Mammary epithelial cell (primary cell): ENCODE measurements at regions of chr11 and their contacts with region 1.

Region 1: DNA sequence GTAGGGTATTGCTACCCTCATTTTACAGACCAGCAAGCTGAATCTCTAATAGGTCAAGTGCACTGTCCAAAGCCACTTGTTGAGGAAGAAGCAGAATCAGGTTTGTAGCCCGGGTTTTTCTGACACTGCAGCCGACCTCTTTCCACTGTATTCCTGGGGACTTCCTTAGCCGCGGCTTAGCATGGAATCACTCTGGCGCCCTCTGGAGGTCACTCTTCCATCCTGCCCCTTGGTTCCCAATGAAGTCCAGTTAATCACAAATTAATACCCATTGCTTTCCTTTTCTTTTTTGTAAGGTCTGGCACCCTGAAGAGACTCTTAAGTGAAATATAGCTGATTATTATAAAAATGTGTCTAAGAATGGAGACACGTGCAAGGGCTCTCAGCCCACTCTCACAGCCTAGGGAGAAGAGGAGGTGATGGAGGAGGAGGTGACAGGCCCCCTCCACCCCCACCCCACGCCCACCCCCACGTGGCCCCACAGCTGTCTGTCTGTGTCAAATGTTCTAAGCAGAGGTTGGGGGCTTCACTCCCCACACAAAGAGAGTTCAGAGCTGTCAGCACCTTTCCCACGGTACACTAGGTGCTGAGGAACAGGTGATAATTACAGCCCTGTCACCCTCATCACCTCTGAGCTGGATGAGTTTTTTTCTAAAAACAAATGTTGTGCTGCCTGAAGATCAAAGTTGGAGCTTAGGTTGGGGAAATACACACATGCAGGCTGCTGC is 57.7 kb upstream of the DRD2 start:
- DNase-seq: peak; percentile 64
- H3K4me3 ChIP-seq: no peak overlapping the region
- H3K27ac ChIP-seq: no peak overlapping the region
- H3K4me1 ChIP-seq: peaks cover 40% of the 10 kb centered on the region
- H3K27me3 ChIP-seq: no peaks in the 10 kb centered on the region
- CTCF ChIP-seq: peak; percentile 93 to 96

Region 2: GRCh38 chr11:112579282-112579681 is 953.6 kb before region 1 on chr11:
- CTCF ChIA-PET with region 1: no interaction called
- dilution Hi-C with region 1: no loop called
- in situ Hi-C with region 1: no loop called
- intact Hi-C with region 1: no loop called
- DNase-seq: no peak
- H3K4me3 ChIP-seq: no peak overlapping the region
- H3K27ac ChIP-seq: no peak overlapping the region
- H3K4me1 ChIP-seq: no peaks in the 10 kb centered on the region
- H3K27me3 ChIP-seq: peaks cover 3% of the 10 kb centered on the region
- CTCF ChIP-seq: no peak

Region 3: DNA sequence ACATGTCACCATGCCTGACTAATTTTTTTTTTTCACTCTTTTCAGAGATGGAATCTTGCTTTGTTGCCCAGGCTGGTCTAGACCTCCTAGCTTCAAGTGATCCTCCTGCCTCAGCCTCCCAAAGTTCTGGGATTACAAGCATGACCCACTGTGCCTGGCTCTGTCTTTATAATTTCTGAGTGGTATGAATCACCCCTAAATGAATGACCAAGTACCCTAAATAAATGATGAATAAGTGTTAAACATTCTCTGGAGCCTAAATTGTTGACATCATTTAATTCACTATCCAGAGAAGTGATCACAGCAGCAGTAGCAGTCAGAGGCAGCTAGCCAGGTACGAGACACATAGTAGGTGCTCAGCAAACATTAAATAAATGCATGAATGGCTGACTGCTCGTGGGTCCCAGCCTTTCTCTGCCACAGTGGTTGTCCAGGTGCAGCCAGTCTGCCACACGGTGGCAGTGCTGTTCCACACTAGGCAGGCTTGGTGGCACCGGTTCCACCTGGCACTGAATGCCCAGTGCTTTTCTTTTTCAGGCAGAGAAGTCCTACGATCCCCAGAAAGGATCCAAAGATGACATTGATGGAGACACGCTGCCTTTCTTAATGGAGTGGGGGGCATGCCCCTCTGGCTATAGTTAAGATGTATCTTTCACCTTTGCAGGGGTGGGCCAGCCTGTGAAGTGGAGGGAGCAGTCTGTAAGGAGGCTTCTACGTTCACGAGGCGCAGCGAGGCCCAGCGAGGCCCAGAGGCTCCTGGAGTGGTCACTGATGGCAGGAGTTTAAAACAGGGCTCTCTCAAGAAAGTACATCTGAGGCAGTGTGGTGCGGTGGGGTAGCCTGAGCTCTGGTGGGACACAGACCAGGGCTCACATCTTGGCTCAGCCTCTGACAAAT is 227.2 kb before region 1 on chr11:
- CTCF ChIA-PET with region 1: no interaction called
- dilution Hi-C with region 1: no loop called
- in situ Hi-C with region 1: loop called (anchors 5 kb)
- intact Hi-C with region 1: loop called (anchors 1 kb)
- DNase-seq: peak; percentile 61
- H3K4me3 ChIP-seq: no peak overlapping the region
- H3K27ac ChIP-seq: no peak overlapping the region
- H3K4me1 ChIP-seq: peaks cover 13% of the 10 kb centered on the region
- H3K27me3 ChIP-seq: no peaks in the 10 kb centered on the region
- CTCF ChIP-seq: peak; percentile 99

Region 4: GRCh38 chr11:113373306-113373705 is 159.6 kb before region 1 on chr11:
- CTCF ChIA-PET with region 1: no interaction called
- dilution Hi-C with region 1: no loop called
- in situ Hi-C with region 1: no loop called
- intact Hi-C with region 1: loop called (anchors 1 kb)
- DNase-seq: peak; percentile 79
- H3K4me3 ChIP-seq: no peak overlapping the region
- H3K27ac ChIP-seq: peak overlapping the region; percentile 60
- H3K4me1 ChIP-seq: peaks cover 56% of the 10 kb centered on the region
- H3K27me3 ChIP-seq: no peaks in the 10 kb centered on the region
- CTCF ChIP-seq: no peak

Region 5: GRCh38 chr11:113397212-113397611 is 135.6 kb before region 1 on chr11:
- CTCF ChIA-PET with region 1: no interaction called
- dilution Hi-C with region 1: no loop called
- in situ Hi-C with region 1: no loop called
- intact Hi-C with region 1: no loop called
- DNase-seq: no peak
- H3K4me3 ChIP-seq: no peak overlapping the region
- H3K27ac ChIP-seq: no peak overlapping the region
- H3K4me1 ChIP-seq: peaks cover 10% of the 10 kb centered on the region
- H3K27me3 ChIP-seq: no peaks in the 10 kb centered on the region
- CTCF ChIP-seq: no peak

Region 6: GRCh38 chr11:113417428-113417827 is 115.4 kb before region 1 on chr11:
- CTCF ChIA-PET with region 1: no interaction called
- dilution Hi-C with region 1: no loop called
- in situ Hi-C with region 1: no loop called
- intact Hi-C with region 1: no loop called
- DNase-seq: no peak
- H3K4me3 ChIP-seq: no peak overlapping the region
- H3K27ac ChIP-seq: no peak overlapping the region
- H3K4me1 ChIP-seq: no peaks in the 10 kb centered on the region
- H3K27me3 ChIP-seq: no peaks in the 10 kb centered on the region
- CTCF ChIP-seq: no peak

Region 7: DNA sequence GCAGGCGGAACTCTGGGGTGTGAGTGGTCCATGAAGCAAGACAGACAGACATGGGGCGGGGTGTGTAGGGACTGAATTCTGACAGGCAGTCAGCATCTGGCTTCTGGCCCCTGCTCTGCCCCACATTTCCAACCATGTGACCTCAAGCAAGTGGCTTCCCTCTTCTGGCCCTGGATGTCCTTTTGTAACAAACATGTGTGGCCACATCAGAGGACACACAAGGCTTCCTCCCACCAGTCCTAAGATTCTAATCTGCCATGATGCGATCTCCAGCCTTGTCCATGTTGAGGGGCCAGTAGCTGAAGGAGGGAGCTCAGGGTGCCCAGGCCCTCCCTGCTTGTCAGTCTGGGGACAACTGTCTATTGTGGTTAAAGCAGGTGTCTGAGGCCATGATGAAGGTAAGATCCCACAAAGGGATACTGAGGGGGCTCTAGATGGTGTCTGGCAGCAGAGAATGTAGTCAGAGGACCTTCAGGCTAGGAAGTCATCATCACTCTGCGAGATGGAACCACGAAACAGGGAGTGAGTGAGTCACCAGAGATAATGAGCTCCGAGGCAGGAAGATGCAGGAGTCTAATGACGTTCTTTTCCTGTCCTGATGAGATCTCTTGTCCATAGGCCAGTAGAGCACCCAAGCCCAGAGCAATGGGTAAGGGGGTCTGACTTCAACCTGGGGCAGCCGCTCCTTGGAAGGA is 85.1 kb before region 1 on chr11:
- CTCF ChIA-PET with region 1: no interaction called
- dilution Hi-C with region 1: no loop called
- in situ Hi-C with region 1: no loop called
- intact Hi-C with region 1: loop called (anchors 2 kb)
- DNase-seq: peak; percentile 93
- H3K4me3 ChIP-seq: no peak overlapping the region
- H3K27ac ChIP-seq: peak overlapping the region; percentile 97
- H3K4me1 ChIP-seq: peaks cover 35% of the 10 kb centered on the region
- H3K27me3 ChIP-seq: no peaks in the 10 kb centered on the region
- CTCF ChIP-seq: no peak

Region 8: DNA sequence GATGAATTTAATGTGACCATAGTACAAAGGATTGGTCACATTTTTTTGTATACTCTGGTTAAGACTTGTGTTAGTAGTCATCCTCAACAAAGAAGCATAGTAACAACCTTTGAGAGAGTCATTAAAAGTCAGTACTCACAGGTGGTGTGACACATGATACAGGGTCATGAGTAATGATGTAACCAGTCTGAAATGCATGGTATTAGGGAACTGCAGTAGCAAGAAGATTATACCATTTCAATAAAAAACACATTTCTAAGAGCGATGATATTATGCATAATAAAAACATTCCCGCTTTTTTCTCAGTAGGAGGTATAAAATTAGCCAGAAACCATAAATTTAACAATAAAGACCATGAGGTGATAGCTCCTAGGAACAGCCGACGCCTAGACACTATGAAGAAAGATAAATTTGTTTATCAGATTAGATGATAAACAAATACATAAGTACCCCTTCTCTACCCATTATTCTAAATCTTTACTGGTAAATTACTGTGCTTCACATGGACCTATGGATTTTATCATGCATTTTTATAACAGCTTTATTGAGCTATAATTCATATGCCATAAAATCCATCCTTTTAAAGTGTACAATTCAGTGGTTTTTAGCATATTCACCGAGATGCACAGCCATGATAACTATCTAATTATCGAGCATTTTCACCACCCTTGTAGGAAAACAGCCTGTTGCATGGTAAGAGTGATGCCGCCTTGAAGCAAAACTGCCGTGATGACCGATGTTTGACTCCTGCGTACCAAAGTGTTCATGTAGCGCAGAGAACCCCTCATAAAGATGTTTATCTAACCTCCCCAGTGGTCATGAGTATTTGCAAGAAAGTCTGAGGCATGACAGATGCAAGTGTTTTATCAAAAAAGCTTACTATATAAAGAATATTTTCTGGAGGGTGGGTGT is 131.5 kb after region 1 on chr11:
- CTCF ChIA-PET with region 1: no interaction called
- dilution Hi-C with region 1: no loop called
- in situ Hi-C with region 1: no loop called
- intact Hi-C with region 1: no loop called
- DNase-seq: peak; percentile 85
- H3K4me3 ChIP-seq: no peak overlapping the region
- H3K27ac ChIP-seq: peak overlapping the region; percentile 51
- H3K4me1 ChIP-seq: peaks cover 15% of the 10 kb centered on the region
- H3K27me3 ChIP-seq: no peaks in the 10 kb centered on the region
- CTCF ChIP-seq: no peak

Region 9: DNA sequence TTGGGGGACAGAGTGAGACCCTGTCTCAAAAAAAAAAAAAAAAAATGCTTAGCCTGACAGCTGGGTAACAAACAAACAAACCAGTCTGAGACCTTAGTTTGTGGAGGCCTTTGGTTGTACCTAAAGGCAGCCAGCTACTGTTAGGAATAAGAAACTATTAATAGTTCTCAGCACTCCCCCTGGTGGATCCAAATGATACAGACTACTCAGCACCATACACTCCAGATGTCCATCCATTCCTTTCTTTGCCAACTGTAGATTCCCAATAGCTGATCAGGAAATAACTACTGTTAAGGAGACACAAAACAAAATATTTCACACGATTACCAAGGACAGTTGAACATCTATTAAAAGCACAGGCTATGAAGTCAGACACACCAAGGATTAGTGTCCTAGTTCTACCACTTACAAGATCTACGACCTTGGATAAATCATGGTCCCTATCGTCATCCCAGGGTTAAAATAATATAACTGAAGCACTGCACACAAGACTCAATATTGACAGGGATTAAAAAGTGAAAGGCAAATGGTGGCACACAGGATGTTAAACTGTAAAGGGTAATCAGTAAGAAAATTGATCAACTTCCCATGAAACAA is 263.9 kb after region 1 on chr11:
- CTCF ChIA-PET with region 1: no interaction called
- dilution Hi-C with region 1: no loop called
- in situ Hi-C with region 1: no loop called
- intact Hi-C with region 1: loop called (anchors 10 kb)
- DNase-seq: peak; percentile 40
- H3K4me3 ChIP-seq: no peak overlapping the region
- H3K27ac ChIP-seq: no peak overlapping the region
- H3K4me1 ChIP-seq: no peaks in the 10 kb centered on the region
- H3K27me3 ChIP-seq: no peaks in the 10 kb centered on the region
- CTCF ChIP-seq: peak; percentile 66 to 71